ENCODE measurements at regions of chr14 and their contacts with region 1.

Region 1: DNA sequence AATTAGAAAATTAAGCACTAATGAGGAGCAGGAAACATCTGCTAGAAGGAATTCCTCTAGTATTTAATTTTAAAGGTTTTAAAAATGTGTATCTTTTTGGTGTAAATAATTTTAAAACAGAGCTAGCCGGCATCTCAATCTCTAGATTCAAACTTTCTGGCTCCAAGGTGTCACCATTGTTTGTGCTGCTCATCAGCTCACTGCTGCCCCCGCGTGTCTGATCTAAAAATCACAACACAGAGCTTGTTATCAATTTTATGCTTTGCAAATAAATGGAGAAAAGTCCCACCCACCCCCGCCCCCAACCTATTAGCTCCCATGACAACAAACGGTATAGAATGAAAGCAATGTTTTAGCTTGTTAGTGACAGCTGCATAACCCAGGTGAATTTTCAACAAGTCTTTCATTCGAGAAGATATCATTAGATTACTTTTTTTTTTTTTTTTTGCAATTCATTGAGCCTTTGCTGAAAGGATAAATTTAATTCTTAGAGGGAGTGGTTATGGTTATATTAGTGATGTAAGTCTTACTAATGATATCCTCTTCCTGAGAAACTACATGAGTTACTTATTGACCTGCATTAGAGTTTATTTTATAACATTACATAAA is 11.3 kb upstream of the ABHD12B start:
- DNase-seq: peak; percentile 94
- ATAC-seq: peak; percentile 80
- H3K4me3 Mint-ChIP-seq: peak overlapping the region; percentile 76
- H3K27ac Mint-ChIP-seq: peak overlapping the region; percentile 82
- H3K4me1 Mint-ChIP-seq: peaks cover 13% of the 10 kb centered on the region
- H3K27me3 Mint-ChIP-seq: peaks cover 3% of the 10 kb centered on the region

Region 2: DNA sequence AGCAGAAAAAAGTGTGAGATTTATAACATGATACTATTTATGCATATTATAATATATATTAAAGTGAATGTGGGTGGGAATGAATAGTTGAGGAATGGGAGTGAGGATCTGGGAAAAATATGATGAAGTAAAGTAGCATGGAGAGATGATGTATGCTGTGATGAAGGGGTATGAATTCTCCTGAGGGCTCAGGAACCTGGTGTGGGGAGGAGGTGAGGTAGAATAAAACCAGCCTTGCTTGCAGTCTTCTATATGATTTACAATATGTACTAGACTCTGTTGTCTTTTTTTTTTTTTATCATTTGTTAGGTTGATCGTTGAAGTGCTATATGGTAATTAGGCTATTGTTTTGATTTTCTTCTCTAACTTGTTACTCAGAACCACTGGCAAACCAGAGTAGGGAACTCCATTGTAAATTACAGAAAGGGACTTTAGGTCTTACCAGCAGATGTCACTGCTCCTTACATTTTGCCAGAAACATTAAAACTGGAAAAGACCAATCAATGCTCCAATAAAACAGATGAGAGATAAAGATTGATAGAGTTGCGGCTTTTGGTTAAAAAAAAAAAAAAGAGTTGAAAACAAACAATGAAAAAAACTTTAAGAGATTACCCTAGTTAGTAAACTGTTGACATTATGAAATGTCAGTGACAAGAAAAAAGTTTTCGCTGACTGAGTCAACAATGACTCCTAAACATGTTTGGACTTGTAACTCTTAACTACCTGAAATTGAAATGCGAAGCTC is 260.7 kb before region 1 on chr14:
- CTCF ChIA-PET with region 1: interaction called, 12 read pairs
- POLR2A ChIA-PET with region 1: no interaction called
- intact Hi-C with region 1: loop called (anchors 1 to 5 kb)
- DNase-seq: no peak
- ATAC-seq: peak; percentile 42
- H3K4me3 Mint-ChIP-seq: no peak overlapping the region
- H3K27ac Mint-ChIP-seq: no peak overlapping the region
- H3K4me1 Mint-ChIP-seq: no peaks in the 10 kb centered on the region
- H3K27me3 Mint-ChIP-seq: no peaks in the 10 kb centered on the region

Region 3: GRCh38 chr14:50726372-50727107 is 134.0 kb before region 1 on chr14:
- CTCF ChIA-PET with region 1: interaction called, 4 read pairs
- POLR2A ChIA-PET with region 1: interaction called, 3 read pairs
- intact Hi-C with region 1: loop called (anchors 2 to 5 kb)
- DNase-seq: peak; percentile 31
- ATAC-seq: peak; percentile 93
- H3K4me3 Mint-ChIP-seq: peak overlapping the region; percentile 39
- H3K27ac Mint-ChIP-seq: peak overlapping the region; percentile 95
- H3K4me1 Mint-ChIP-seq: peaks cover 32% of the 10 kb centered on the region
- H3K27me3 Mint-ChIP-seq: no peaks in the 10 kb centered on the region

Region 4: GRCh38 chr14:50778721-50779483 is 81.7 kb before region 1 on chr14:
- CTCF ChIA-PET with region 1: interaction called, 115 read pairs
- POLR2A ChIA-PET with region 1: interaction called, 3 read pairs
- intact Hi-C with region 1: loop called (anchors 1 to 2 kb)
- DNase-seq: no peak
- ATAC-seq: no peak
- H3K4me3 Mint-ChIP-seq: no peak overlapping the region
- H3K27ac Mint-ChIP-seq: no peak overlapping the region
- H3K4me1 Mint-ChIP-seq: peaks cover 36% of the 10 kb centered on the region
- H3K27me3 Mint-ChIP-seq: no peaks in the 10 kb centered on the region

Region 5: GRCh38 chr14:50823051-50823761 is 37.4 kb before region 1 on chr14:
- CTCF ChIA-PET with region 1: interaction called, 21 read pairs
- POLR2A ChIA-PET with region 1: no interaction called
- intact Hi-C with region 1: no loop called
- DNase-seq: peak; percentile 57
- ATAC-seq: peak; percentile 31
- H3K4me3 Mint-ChIP-seq: peak overlapping the region; percentile 64
- H3K27ac Mint-ChIP-seq: peak overlapping the region; percentile 82
- H3K4me1 Mint-ChIP-seq: peaks cover 85% of the 10 kb centered on the region
- H3K27me3 Mint-ChIP-seq: no peaks in the 10 kb centered on the region

Region 6: DNA sequence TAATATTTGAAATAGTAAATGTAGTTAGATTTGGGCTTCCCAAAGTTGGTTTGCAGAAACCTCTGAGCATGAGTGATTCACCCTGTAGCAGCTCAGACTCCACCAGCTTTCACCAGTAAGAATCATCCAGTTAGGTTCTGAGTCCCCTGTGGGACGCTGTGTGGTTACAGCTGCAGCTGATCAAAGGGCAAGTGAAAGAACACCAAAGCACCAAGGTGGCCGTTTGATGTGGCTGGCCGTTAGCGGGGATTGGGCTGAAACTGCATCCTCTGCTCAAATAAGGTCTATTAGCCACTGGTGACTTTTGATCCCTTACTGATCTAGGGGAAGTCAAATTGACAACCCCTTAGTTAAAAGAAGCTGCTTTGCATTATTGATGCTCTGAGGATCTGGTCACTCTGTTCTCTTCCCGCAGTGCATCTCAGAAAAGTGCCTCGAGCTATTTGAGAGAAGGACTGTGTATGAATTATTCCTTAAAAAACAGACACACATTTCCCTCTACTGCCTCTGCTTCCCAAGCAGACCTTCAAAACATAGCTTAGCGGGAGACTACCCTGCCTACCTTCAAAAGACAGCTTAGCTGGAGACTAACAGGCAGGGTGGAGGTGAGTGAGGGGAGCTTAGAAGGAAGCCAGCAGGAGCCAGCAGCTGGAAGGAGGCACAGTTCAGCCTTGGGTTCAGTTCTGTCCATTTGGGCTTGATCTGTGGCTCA is 14.9 kb after region 1 on chr14:
- CTCF ChIA-PET with region 1: interaction called, 20 read pairs
- POLR2A ChIA-PET with region 1: no interaction called
- intact Hi-C with region 1: no loop called
- DNase-seq: peak; percentile 85
- ATAC-seq: peak; percentile 99
- H3K4me3 Mint-ChIP-seq: no peak overlapping the region
- H3K27ac Mint-ChIP-seq: no peak overlapping the region
- H3K4me1 Mint-ChIP-seq: peaks cover 30% of the 10 kb centered on the region
- H3K27me3 Mint-ChIP-seq: peaks cover 60% of the 10 kb centered on the region